ENCODE measurements at regions of chr9 and their contacts with region 1.

Region 1: GRCh38 chr9:93962561-93963440 is 7.6 kb upstream of the BARX1 start:
- DNase-seq: peak; percentile 51
- ATAC-seq: peak; percentile 43
- H3K4me3 Mint-ChIP-seq: no peak overlapping the region
- H3K27ac Mint-ChIP-seq: no peak overlapping the region
- H3K4me1 Mint-ChIP-seq: peaks cover 27% of the 10 kb centered on the region
- H3K27me3 Mint-ChIP-seq: peaks cover 47% of the 10 kb centered on the region
- CTCF ChIP-seq: peak; percentile 49

Region 2: GRCh38 chr9:93108291-93109041 is 854.3 kb before region 1 on chr9:
- CTCF ChIA-PET with region 1: no interaction called
- POLR2A ChIA-PET with region 1: no interaction called
- intact Hi-C with region 1: loop called (anchors 2 kb)
- DNase-seq: no peak
- ATAC-seq: peak; percentile 56
- H3K4me3 Mint-ChIP-seq: no peak overlapping the region
- H3K27ac Mint-ChIP-seq: no peak overlapping the region
- H3K4me1 Mint-ChIP-seq: peaks cover 28% of the 10 kb centered on the region
- H3K27me3 Mint-ChIP-seq: no peaks in the 10 kb centered on the region
- CTCF ChIP-seq: no peak

Region 3: DNA sequence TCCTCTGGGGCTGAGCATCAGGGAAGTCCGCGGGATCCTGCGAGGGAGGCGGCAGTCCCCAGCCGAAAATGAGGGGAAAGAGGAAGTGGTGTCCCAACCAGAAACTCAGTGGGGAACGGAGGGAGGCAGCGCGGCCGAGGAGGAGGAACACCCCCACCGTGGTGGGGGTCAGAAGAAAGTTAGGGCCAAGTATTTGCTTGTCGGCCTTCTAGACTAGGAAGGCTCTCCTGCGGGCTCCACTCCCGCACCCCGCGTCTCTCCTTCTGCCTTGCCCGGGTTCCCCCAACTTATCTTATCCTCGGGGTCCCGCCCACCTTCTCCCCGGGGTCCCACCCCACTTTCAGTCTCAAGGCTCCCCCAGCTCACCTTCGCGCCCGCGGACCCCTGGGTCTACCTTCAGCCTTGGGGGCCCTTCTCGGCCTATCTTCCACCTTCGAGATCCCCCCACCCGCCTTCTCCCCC is 387.0 kb before region 1 on chr9:
- CTCF ChIA-PET with region 1: no interaction called
- POLR2A ChIA-PET with region 1: no interaction called
- intact Hi-C with region 1: loop called (anchors 5 kb)
- DNase-seq: no peak
- ATAC-seq: peak; percentile 38
- H3K4me3 Mint-ChIP-seq: peak overlapping the region; percentile 89
- H3K27ac Mint-ChIP-seq: peak overlapping the region; percentile 89
- H3K4me1 Mint-ChIP-seq: peaks cover 30% of the 10 kb centered on the region
- H3K27me3 Mint-ChIP-seq: no peaks in the 10 kb centered on the region
- CTCF ChIP-seq: no peak

Region 4: DNA sequence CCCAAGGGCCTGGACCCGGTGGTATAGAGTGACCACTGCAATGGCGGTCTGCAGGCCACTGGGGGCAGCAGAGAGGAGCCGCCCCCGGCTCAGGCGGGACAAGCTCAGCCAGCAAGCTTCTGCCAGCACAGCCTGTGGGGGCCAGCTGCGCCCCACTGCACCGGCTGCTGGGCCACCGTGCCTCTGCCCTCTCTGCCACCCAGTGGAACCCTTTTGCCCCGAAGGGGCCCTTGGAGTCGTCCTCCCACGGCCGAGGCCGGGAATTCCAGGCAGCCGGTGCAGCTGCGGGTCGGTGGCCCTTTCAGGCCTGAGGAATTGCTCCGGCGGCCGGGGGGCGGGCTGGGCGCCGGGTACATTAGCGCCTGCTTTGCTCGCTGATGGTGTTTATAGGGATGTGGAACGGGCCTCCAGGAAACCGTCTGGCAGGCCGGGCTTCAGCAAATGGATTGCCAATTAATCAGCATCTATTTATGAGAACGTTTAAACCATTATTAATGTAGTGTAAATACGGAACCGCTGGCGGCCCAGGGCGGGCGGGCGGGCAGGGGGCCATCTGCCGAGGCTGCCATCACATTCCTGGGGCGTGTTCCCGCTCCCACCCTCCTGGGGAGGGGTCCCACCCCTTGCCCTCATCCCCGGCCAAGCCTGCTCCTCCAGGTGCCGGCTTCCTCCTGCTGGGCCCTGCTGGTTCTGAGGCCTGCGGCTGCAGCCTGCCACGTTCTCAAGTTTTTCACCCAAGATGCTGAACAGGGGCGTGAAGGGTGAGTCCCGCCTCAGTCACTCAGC is 135.1 kb before region 1 on chr9:
- CTCF ChIA-PET with region 1: no interaction called
- POLR2A ChIA-PET with region 1: no interaction called
- intact Hi-C with region 1: loop called (anchors 1 kb)
- DNase-seq: no peak
- ATAC-seq: peak; percentile 49
- H3K4me3 Mint-ChIP-seq: no peak overlapping the region
- H3K27ac Mint-ChIP-seq: no peak overlapping the region
- H3K4me1 Mint-ChIP-seq: peaks cover 10% of the 10 kb centered on the region
- H3K27me3 Mint-ChIP-seq: peaks cover 41% of the 10 kb centered on the region
- CTCF ChIP-seq: no peak

Measured in activated B cell treated with CpG ODN at 0.5 μM for 24 hours (primary cell).